AG04450 (cell line): ENCODE measurements at regions of chr4 and their contacts with region 1.

Region 1: GRCh38 chr4:106329041-106329618 is 12.8 kb downstream of the AIMP1 start:
- DNase-seq: peak; percentile 21
- H3K4me3 ChIP-seq: no peak overlapping the region
- H3K27ac ChIP-seq: no peak overlapping the region
- H3K27me3 ChIP-seq: no peaks in the 10 kb centered on the region
- CTCF ChIP-seq: peak; percentile 77

Region 2: GRCh38 chr4:104693599-104694201 is 1635.4 kb before region 1 on chr4:
- CTCF ChIA-PET with region 1: no interaction called
- POLR2A ChIA-PET with region 1: no interaction called
- DNase-seq: no peak
- H3K4me3 ChIP-seq: no peak overlapping the region
- H3K27ac ChIP-seq: no peak overlapping the region
- H3K27me3 ChIP-seq: no peaks in the 10 kb centered on the region
- CTCF ChIP-seq: peak; percentile 59

Region 3: GRCh38 chr4:106090826-106091225 is 238.3 kb before region 1 on chr4:
- CTCF ChIA-PET with region 1: no interaction called
- POLR2A ChIA-PET with region 1: no interaction called
- DNase-seq: no peak
- H3K4me3 ChIP-seq: no peak overlapping the region
- H3K27ac ChIP-seq: no peak overlapping the region
- H3K27me3 ChIP-seq: no peaks in the 10 kb centered on the region
- CTCF ChIP-seq: no peak

Region 4: DNA sequence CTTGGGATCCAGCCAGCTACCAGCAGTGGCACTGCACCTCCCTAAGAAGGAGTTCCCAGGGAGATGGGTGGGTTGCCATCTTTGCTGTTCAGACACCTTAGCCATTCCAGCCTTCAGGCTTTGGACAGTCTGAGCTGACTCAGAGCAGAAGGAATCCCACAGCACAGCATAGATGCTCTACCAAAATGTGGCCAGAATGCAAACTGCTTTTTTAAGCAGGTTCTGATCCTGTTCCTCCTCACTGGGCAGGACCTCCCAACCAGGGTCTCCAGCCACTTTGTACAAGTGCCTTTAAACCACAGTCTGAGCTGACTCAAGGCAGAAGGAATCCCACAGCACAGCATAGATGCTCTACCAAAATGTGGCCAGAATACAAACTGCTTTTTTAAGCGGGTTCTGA is 224.9 kb before region 1 on chr4:
- CTCF ChIA-PET with region 1: no interaction called
- POLR2A ChIA-PET with region 1: no interaction called
- DNase-seq: no peak
- H3K4me3 ChIP-seq: no peak overlapping the region
- H3K27ac ChIP-seq: no peak overlapping the region
- H3K27me3 ChIP-seq: no peaks in the 10 kb centered on the region
- CTCF ChIP-seq: no peak

Region 5: DNA sequence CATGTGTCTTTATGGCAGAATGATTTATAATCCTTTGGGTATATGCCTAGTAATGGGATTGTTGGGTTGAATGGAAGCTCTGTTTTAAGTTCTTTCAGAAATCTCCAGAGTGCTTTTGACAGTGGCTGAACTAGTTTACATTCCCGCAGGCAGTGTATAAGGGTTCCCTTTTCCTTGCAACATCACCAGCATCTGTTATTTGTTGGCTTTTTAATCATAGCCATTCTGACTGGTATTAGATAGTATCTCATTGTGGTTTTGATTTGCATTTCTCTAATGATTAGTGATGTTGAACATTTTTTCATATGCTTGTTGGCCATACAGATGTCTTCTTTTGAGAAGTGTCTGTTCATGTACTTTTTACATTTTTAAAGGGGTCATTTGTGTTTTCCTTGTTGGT is 142.9 kb before region 1 on chr4:
- CTCF ChIA-PET with region 1: no interaction called
- POLR2A ChIA-PET with region 1: no interaction called
- DNase-seq: no peak
- H3K4me3 ChIP-seq: no peak overlapping the region
- H3K27ac ChIP-seq: no peak overlapping the region
- H3K27me3 ChIP-seq: no peaks in the 10 kb centered on the region
- CTCF ChIP-seq: no peak

Region 6: DNA sequence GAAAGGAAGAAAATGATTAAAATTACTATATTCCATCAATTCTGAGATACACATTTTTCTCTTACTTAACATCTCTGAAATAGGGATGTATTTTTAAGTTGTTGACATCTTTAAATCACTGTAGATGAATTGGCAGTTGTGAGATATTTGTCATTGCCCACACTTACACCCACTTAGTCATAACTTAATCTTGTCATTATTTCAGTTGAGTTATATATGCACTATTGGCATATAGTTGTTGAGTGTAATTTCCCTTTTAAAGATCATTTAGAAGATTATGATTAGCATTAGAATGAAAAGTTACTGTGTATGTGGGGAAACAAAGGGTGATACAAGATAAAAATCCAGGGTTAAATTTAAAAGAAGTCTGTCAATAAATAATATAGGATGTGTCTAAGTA is 10.6 kb before region 1 on chr4:
- CTCF ChIA-PET with region 1: interaction called, 12 read pairs
- POLR2A ChIA-PET with region 1: no interaction called
- DNase-seq: no peak
- H3K4me3 ChIP-seq: no peak overlapping the region
- H3K27ac ChIP-seq: no peak overlapping the region
- H3K27me3 ChIP-seq: no peaks in the 10 kb centered on the region
- CTCF ChIP-seq: no peak

Region 7: DNA sequence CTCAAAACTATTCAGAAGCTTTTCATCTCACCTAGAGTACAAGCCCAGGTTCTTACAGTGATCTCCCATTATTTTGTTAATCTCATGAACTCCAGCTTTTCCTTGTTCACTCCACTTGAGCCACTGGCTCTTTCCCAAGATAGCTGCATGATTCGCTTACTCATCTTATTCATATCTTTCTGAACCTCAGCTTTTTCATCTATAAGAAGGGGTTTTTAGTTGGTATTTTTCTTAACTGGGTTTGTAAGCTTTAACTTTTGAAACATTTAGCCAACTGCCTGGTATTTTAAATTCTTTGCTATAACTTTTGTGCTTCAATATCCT is 15.5 kb after region 1 on chr4:
- CTCF ChIA-PET with region 1: interaction called, 18 read pairs
- POLR2A ChIA-PET with region 1: no interaction called
- DNase-seq: peak; percentile 10
- H3K4me3 ChIP-seq: no peak overlapping the region
- H3K27ac ChIP-seq: no peak overlapping the region
- H3K27me3 ChIP-seq: no peaks in the 10 kb centered on the region
- CTCF ChIP-seq: no peak

Region 8: GRCh38 chr4:106502106-106502699 is 173.1 kb after region 1 on chr4:
- CTCF ChIA-PET with region 1: interaction called, 20 read pairs
- POLR2A ChIA-PET with region 1: no interaction called
- DNase-seq: peak; percentile 7
- H3K4me3 ChIP-seq: no peak overlapping the region
- H3K27ac ChIP-seq: no peak overlapping the region
- H3K27me3 ChIP-seq: no peaks in the 10 kb centered on the region
- CTCF ChIP-seq: peak; percentile 84